ENCODE measurements at regions of chr16 and their contacts with region 1.

Region 1: DNA sequence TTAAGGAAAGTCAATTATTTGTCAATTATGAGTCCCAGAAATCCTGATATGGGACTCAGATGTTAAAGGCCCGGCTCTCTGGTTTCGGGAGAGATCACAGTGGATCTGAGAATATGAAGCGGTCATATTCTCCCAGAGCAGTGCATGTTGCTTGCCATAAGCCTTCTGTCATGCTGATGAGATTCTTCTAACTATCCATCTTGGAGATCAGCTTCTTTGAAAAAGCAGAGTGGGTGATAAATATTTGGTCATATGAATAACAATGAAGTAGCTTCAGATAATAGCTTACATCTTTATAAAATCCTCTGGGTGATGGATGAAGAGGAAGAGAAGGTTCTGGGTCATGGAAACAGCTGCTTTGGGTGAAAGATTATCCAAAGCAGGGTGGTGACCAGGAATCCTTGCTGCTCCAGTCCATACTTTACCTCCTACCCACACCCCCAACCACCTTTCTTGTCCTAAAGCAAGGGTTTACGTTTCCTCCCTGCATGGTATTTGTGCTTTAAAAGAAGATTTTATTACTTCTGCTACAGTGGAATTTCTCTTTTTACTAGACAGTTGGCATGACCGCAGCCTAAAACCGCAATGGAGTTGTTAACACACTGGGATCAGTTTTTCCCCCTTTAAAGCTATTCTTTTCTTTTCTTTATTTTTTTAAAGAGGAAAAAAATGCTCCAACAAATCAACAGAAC is 236.3 kb downstream of the IRX3 start:
- DNase-seq: no peak
- ATAC-seq: no peak
- H3K4me3 Mint-ChIP-seq: no peak overlapping the region
- H3K27ac Mint-ChIP-seq: no peak overlapping the region
- H3K4me1 Mint-ChIP-seq: no peaks in the 10 kb centered on the region
- H3K27me3 Mint-ChIP-seq: no peaks in the 10 kb centered on the region
- CTCF ChIP-seq: no peak

Region 2: GRCh38 chr16:54318941-54319340 is 268.6 kb after region 1 on chr16:
- CTCF ChIA-PET with region 1: no interaction called
- POLR2A ChIA-PET with region 1: no interaction called
- intact Hi-C with region 1: no loop called
- DNase-seq: no peak
- ATAC-seq: no peak
- H3K4me3 Mint-ChIP-seq: no peak overlapping the region
- H3K27ac Mint-ChIP-seq: no peak overlapping the region
- H3K4me1 Mint-ChIP-seq: no peaks in the 10 kb centered on the region
- H3K27me3 Mint-ChIP-seq: peaks cover 2% of the 10 kb centered on the region
- CTCF ChIP-seq: no peak

Region 3: GRCh38 chr16:55597928-55598327 is 1547.6 kb after region 1 on chr16:
- CTCF ChIA-PET with region 1: no interaction called
- POLR2A ChIA-PET with region 1: no interaction called
- intact Hi-C with region 1: loop called (anchors 5 kb)
- DNase-seq: no peak
- ATAC-seq: no peak
- H3K4me3 Mint-ChIP-seq: no peak overlapping the region
- H3K27ac Mint-ChIP-seq: no peak overlapping the region
- H3K4me1 Mint-ChIP-seq: no peaks in the 10 kb centered on the region
- H3K27me3 Mint-ChIP-seq: peaks cover 6% of the 10 kb centered on the region
- CTCF ChIP-seq: no peak